Right cardiac atrium (tissue), 5 donors: ENCODE measurements at regions of chr13 and their contacts with region 1.

Region 1: GRCh38 chr13:37495046-37495445 is 103.5 kb downstream of the POSTN start:
- DNase-seq: no peak
- ATAC-seq: peak in 1 of 2 donors; percentile 26
- H3K4me3 ChIP-seq: no peak overlapping the region
- H3K27ac ChIP-seq: no peak overlapping the region
- H3K4me1 ChIP-seq: no peaks in the 10 kb centered on the region
- H3K27me3 ChIP-seq: no peaks in the 10 kb centered on the region

Region 2: DNA sequence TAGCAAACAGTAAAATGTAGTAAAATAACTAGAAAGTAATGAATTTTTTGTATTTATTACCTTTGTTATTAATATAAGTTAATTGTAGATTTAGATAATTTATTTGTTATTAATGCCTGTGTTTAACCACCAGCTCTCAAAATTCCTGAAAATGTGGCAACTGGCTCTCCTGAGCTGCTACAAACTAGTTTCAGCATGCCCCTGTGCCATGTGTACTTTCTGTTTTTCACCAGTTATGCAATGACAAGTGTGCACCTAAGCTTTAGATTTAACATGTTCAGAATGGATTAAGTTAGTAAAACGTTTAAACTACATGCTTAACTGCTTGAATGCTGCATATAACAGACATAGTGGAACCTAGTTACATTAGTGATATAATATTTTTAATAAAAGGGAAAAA is 15.4 kb after region 1 on chr13:
- intact Hi-C with region 1: loop called in 1 of 4 experiments (anchors 1 kb)
- DNase-seq: no peak
- ATAC-seq: no peak
- H3K4me3 ChIP-seq: no peak overlapping the region
- H3K27ac ChIP-seq: no peak overlapping the region
- H3K4me1 ChIP-seq: no peaks in the 10 kb centered on the region
- H3K27me3 ChIP-seq: no peaks in the 10 kb centered on the region